Activated naive CD4-positive, alpha-beta T cell treated with anti-CD3 and anti-CD28 coated beads for 36 hours (primary cell): ENCODE measurements at regions of chr19 and their contacts with region 1.

Region 1: GRCh38 chr19:6460101-6460853 is 685 bp upstream of the SLC25A23 start:
- DNase-seq: peak; percentile 98
- H3K4me3 Mint-ChIP-seq: peak overlapping the region; percentile 90
- H3K27ac Mint-ChIP-seq: peak overlapping the region; percentile 78
- H3K4me1 Mint-ChIP-seq: peaks cover 22% of the 10 kb centered on the region
- H3K27me3 Mint-ChIP-seq: no peaks in the 10 kb centered on the region

Region 2: GRCh38 chr19:6362027-6362350 is 98.3 kb before region 1 on chr19:
- CTCF ChIA-PET with region 1: no interaction called
- intact Hi-C with region 1: loop called (anchors 1 kb)
- DNase-seq: no peak
- H3K4me3 Mint-ChIP-seq: peak overlapping the region; percentile 98
- H3K27ac Mint-ChIP-seq: peak overlapping the region; percentile 95
- H3K4me1 Mint-ChIP-seq: peaks cover 17% of the 10 kb centered on the region
- H3K27me3 Mint-ChIP-seq: no peaks in the 10 kb centered on the region

Region 3: DNA sequence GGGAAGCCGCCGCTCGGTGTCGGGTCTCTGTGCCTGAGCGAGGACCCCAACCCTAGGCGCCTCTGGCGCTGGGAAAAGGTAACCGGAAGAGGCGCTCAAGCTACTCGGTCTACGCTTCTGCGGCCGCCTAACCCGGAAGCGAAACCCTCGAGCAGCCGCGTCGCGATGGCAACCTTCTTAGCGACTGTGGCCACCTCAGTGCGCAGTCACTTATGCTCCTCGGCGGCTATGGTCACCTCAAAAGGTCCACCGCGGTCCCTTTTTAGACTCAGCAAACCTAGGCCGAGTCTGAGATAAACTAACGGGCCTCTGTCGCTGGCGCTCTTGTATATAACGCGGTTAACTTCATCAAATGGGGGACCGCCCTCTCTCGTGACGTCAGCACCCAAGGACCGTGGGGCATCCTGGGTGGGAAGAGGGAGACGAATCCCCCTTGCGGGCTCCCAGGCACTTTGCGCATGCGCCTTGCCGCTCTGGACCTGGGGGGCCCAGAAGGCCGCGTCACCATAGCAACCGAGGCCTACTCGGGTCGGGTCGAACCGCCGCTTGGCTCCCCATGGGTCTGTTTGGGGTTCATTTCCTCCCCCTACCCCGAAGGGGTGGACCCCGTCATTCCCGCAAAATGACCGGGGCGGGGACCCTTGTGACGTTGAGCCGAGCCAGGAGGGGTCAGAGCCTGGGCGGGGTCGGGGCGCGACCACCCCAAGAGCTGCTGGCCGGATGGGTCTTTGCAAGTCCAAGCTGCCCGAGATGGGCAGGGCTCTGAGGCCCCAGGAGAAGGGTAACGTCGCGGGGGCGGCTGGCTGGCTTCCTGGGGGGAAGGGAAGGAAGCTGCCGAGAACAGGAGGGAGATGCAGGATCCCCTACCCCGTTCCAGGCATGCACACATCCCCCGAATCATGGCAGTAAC is 66.9 kb before region 1 on chr19 and contains the start of gene GTF2F1:
- CTCF ChIA-PET with region 1: no interaction called
- intact Hi-C with region 1: loop called (anchors 1 kb)
- DNase-seq: peak; percentile 95
- H3K4me3 Mint-ChIP-seq: peak within 1 kb of the TSS; percentile 88
- H3K27ac Mint-ChIP-seq: peak within 1 kb of the TSS; percentile 92
- H3K4me1 Mint-ChIP-seq: peaks cover 16% of the 10 kb centered on the region
- H3K27me3 Mint-ChIP-seq: no peaks in the 10 kb centered on the region
- total RNA-seq, gene GTF2F1: 53.5 to 63.0 TPM

Region 4: GRCh38 chr19:6424939-6425731 is 35.1 kb before region 1 on chr19:
- CTCF ChIA-PET with region 1: no interaction called
- intact Hi-C with region 1: loop called (anchors 1 kb)
- DNase-seq: peak; percentile 100
- H3K4me3 Mint-ChIP-seq: peak overlapping the region; percentile 76
- H3K27ac Mint-ChIP-seq: peak overlapping the region; percentile 94
- H3K4me1 Mint-ChIP-seq: peaks cover 36% of the 10 kb centered on the region
- H3K27me3 Mint-ChIP-seq: no peaks in the 10 kb centered on the region

Region 5: DNA sequence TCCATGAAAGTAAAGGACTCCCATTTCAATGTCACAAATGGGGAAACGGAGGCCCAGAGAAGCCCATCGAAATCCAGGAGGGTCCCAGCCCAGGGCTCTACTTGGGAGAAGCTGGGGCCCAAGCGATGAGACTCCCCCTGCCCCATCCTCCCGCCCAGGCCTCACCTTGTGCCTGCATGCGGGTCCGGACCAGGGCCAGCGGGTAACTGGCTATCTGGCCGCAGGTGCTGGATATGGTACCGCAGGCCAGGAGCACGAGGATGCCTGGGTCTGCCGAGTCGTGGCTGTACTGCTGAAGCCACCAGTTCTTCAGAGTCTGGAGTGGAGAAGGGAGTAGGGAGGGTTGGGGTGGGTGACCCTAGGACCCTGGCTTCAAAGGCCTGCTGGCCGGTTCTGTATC is 16.3 kb before region 1 on chr19:
- CTCF ChIA-PET with region 1: no interaction called
- intact Hi-C with region 1: no loop called
- DNase-seq: no peak
- H3K4me3 Mint-ChIP-seq: no peak overlapping the region
- H3K27ac Mint-ChIP-seq: no peak overlapping the region
- H3K4me1 Mint-ChIP-seq: no peaks in the 10 kb centered on the region
- H3K27me3 Mint-ChIP-seq: no peaks in the 10 kb centered on the region

Region 6: GRCh38 chr19:6481541-6482342 is 21.5 kb after region 1 on chr19 and contains the start of gene DENND1C:
- CTCF ChIA-PET with region 1: interaction called, 3 read pairs
- intact Hi-C with region 1: loop called (anchors 1 kb)
- DNase-seq: peak; percentile 86
- H3K4me3 Mint-ChIP-seq: peak within 1 kb of the TSS; percentile 95
- H3K27ac Mint-ChIP-seq: peak within 1 kb of the TSS; percentile 94
- H3K4me1 Mint-ChIP-seq: peaks cover 31% of the 10 kb centered on the region
- H3K27me3 Mint-ChIP-seq: no peaks in the 10 kb centered on the region
- total RNA-seq, gene DENND1C: 55.7 to 57.9 TPM

Region 7: DNA sequence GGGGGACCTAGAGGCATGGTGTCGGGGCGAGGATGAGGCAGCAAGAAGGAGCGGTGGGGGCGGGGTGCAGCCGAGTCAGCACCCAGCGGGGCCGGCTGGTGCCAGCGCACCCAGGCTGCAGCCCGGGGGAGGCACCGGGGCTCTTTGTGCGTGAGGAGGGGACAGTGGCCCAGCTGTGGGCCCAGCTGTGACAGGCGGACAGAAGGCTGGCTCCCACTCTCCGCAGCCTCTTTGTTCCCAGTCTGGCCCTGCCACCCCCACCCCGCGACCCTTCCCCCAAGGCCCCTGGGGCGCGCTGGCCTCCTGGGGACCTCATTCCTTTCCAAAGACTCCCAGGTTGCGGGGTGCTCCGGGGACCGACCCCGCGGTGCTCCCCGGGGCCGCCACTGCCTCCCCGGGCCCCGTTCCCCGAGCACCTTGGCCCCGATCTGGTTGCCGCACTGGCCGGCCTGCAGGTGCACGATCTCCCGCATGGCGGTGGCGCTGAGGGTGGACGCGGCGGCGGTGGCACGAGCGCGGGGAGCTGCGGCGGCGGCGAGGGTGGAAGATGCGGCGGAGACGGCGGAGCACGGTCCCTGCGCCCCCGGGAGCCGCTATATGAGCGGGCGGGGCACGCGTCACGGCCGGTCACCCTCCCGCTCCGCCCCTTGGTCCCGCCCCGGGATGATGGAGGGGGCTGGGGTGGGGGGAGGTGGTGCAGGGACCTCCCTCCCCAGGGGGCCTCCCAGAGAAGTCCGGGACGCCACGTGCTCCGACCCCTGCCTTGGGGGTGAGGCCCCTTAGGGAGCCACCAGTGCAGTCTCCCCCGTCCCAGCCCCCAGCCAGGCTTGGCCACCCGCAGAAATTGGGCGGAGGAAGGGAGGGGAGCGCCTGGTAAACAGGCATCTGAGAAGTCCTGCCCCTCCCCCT is 41.7 kb after region 1 on chr19 and contains the start of gene TUBB4A:
- CTCF ChIA-PET with region 1: interaction called, 3 read pairs
- intact Hi-C with region 1: loop called (anchors 2 kb)
- DNase-seq: peak; percentile 58
- H3K4me3 Mint-ChIP-seq: peak within 1 kb of the TSS; percentile 68
- H3K27ac Mint-ChIP-seq: no peak within 1 kb of the TSS
- H3K4me1 Mint-ChIP-seq: peaks cover 9% of the 10 kb centered on the region
- H3K27me3 Mint-ChIP-seq: peaks cover 5% of the 10 kb centered on the region
- total RNA-seq, gene TUBB4A: 6.4 to 7.0 TPM

Region 8: GRCh38 chr19:6667114-6667627 is 206.9 kb after region 1 on chr19:
- CTCF ChIA-PET with region 1: no interaction called
- intact Hi-C with region 1: no loop called
- DNase-seq: no peak
- H3K4me3 Mint-ChIP-seq: peak overlapping the region; percentile 99
- H3K27ac Mint-ChIP-seq: peak overlapping the region; percentile 79
- H3K4me1 Mint-ChIP-seq: peaks cover 46% of the 10 kb centered on the region
- H3K27me3 Mint-ChIP-seq: no peaks in the 10 kb centered on the region

Region 9: DNA sequence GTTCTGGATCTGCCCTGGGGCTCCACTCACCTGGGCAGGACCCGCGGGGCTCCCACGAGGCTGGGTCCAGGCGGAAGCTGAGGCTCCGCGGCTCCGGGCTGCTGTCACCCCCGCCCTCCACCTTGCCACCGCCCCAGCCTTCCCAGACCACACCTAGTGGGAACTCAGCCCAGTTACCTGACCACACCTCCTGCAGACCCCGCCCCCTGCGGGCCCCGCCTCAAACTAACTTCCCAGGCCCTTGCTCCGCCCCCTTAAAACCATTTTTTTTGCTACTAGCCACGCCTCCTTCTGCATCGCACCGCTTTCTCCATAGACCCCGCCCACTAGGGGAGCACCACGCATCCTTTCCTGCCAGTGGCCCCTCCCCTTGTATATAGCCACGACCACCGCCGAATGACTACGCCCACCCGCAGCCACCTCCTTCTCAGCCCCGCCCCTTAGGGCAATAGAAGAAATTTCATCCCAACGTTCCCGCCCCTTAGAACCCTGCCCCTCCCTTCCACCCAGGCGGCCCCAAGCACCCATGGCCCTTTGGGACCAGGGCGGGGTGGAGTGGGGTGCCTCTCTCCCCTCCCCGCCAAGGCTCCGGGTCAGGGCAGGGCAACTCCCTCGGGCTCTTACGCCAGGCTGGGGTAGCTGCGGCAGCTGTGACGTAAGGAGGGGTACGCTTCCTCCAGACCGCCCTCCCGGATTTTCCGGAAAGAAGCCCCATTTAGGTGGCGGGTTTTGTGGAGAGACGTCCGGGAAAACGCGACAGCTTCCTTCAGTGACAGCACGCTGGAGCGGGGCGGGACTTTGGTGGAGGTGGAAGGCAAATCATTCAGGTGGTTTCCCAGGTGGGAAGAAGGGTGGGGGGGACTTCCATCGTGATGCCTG is 307.3 kb after region 1 on chr19 and contains the start of gene SH2D3A:
- CTCF ChIA-PET with region 1: no interaction called
- intact Hi-C with region 1: loop called (anchors 1 kb)
- DNase-seq: peak; percentile 98
- H3K4me3 Mint-ChIP-seq: peak within 1 kb of the TSS; percentile 94
- H3K27ac Mint-ChIP-seq: peak within 1 kb of the TSS; percentile 91
- H3K4me1 Mint-ChIP-seq: peaks cover 39% of the 10 kb centered on the region
- H3K27me3 Mint-ChIP-seq: no peaks in the 10 kb centered on the region
- total RNA-seq, gene SH2D3A: 23.2 to 24.9 TPM